Caco-2 (cell line): ENCODE measurements at regions of chr1 and their contacts with region 1.

Region 1: DNA sequence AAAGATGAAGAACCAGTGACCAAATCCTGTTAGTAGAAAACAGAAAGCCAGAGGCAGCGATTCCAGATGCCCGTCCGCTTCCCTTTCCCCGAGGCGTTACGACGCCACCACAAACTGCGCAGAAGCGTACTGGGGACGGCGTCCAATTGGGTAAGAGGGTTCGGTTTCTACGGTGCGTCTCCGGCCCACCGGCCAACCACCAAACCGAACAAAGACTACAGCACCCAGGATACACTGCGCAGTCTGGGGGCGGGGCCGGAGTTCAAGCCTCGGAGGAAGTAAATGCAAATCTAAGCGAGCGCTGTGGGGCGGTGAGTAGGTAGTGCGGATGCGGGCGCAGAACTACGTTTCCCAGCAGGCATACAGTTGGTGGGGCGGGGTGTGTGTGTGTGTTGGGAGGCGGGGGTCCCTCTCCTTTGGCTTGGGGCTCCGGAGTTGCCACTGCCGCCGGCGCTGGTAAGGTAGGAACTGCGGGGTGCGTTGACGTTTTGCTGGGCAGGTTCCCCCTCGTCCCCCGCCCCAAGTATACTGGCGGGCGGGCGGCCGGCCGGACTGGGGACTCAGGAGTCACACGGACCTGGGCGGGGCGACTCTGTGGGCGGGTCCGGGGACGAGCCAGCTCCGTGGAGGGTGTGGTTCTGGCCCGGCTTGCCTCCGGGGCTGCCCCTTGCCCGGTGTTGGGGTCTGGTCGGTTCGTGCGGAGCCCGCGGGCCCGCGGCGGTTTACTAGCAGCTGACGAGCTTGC is at the starts of genes SWT1 and TRMT1L:
- DNase-seq: peak; percentile 98
- H3K4me3 ChIP-seq: peak within 1 kb of the TSS; percentile 88
- H3K4me3 Mint-ChIP-seq: peak within 1 kb of the TSS; percentile 93
- H3K27ac Mint-ChIP-seq: peak within 1 kb of the TSS; percentile 87
- H3K4me1 ChIP-seq: peaks cover 11% of the 10 kb centered on the region; the same call in 1 of the 2 replicates
- H3K4me1 Mint-ChIP-seq: peaks cover 7% of the 10 kb centered on the region
- H3K27me3 ChIP-seq: no peaks in the 10 kb centered on the region
- H3K27me3 Mint-ChIP-seq: no peaks in the 10 kb centered on the region
- CTCF ChIP-seq: no peak
- total RNA-seq, gene SWT1: 2.7 and 2.9 TPM in 2 replicates
- total RNA-seq, gene TRMT1L: 14.2 and 23.8 TPM in 2 replicates

Region 2: GRCh38 chr1:184754476-184755225 is 402.4 kb before region 1 on chr1 and contains the start of gene EDEM3:
- CTCF ChIA-PET with region 1: no interaction called
- POLR2A ChIA-PET with region 1: no interaction called
- intact Hi-C with region 1: loop called (anchors 5 kb)
- DNase-seq: peak; percentile 98 to 99
- H3K4me3 ChIP-seq: peak within 1 kb of the TSS; percentile 82
- H3K4me3 Mint-ChIP-seq: peak within 1 kb of the TSS; percentile 98
- H3K27ac Mint-ChIP-seq: peak within 1 kb of the TSS; percentile 90
- H3K4me1 ChIP-seq: peaks cover 14% of the 10 kb centered on the region
- H3K4me1 Mint-ChIP-seq: peaks cover 25% of the 10 kb centered on the region
- H3K27me3 ChIP-seq: no peaks in the 10 kb centered on the region
- H3K27me3 Mint-ChIP-seq: no peaks in the 10 kb centered on the region
- CTCF ChIP-seq: no peak
- total RNA-seq, gene EDEM3: 13.7 and 14.1 TPM in 2 replicates

Region 3: DNA sequence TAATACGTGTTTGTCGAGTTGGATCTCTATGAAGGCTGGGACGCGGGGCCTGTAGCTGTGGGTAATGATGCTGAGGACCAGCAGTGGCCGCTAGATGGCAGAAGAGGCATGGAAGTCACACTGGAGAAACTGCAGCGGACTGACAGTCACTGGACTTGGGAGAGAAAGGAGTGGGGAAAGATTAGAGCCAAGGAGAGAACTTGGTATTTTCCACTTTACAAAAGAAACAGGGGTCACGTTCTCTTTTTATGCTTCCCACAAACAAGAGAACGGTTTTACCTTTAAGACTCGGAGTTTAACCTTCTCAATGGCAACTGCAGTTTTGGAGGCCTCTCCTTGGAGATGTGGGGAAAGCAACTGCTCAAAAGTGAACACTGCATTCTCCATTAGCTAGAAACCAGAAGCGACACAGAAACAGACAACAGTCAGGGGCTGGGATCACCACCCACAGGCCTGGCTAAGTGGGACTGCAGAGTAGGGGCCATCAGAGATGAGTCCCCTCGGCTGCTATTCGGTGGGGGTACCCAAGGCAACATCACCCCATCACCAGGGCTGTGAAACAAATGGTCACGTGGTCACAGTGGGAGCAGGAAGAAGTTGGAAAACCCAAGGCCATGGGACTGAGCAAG is 351.2 kb before region 1 on chr1:
- CTCF ChIA-PET with region 1: interaction called, 3 read pairs
- POLR2A ChIA-PET with region 1: no interaction called
- intact Hi-C with region 1: loop called (anchors 5 kb)
- DNase-seq: peak; percentile 83 to 89
- H3K4me3 ChIP-seq: no peak overlapping the region
- H3K4me3 Mint-ChIP-seq: no peak overlapping the region
- H3K27ac Mint-ChIP-seq: no peak overlapping the region
- H3K4me1 ChIP-seq: no peaks in the 10 kb centered on the region
- H3K4me1 Mint-ChIP-seq: peaks cover 9% of the 10 kb centered on the region
- H3K27me3 ChIP-seq: no peaks in the 10 kb centered on the region
- H3K27me3 Mint-ChIP-seq: no peaks in the 10 kb centered on the region
- CTCF ChIP-seq: peak; percentile 88 to 94

Region 4: DNA sequence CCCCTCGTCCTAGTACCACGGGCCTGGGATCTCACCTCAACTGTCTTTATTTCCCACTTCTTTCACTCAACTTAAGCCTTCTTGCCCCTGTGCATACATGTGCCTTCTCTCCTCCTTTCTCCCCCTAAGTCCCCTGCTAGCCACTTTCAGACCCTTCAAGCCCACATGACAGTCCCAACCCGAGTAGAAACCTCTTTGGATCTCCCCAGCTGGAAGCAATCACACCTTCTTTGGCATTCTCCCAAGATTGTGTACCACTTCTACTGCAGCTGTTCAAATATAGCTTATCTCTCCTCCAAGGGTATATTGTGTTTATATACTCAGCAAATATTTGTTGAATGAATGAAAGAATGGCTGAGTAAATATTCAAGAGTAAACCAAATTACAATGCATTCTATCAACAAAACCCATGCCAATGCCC is 251.5 kb before region 1 on chr1:
- CTCF ChIA-PET with region 1: no interaction called
- POLR2A ChIA-PET with region 1: no interaction called
- intact Hi-C with region 1: loop called (anchors 2 kb)
- DNase-seq: peak; percentile 63 to 72
- H3K4me3 ChIP-seq: no peak overlapping the region
- H3K4me3 Mint-ChIP-seq: peak overlapping the region; percentile 29
- H3K27ac Mint-ChIP-seq: peak overlapping the region; percentile 85
- H3K4me1 ChIP-seq: peaks cover 31% of the 10 kb centered on the region
- H3K4me1 Mint-ChIP-seq: peaks cover 17% of the 10 kb centered on the region
- H3K27me3 ChIP-seq: no peaks in the 10 kb centered on the region
- H3K27me3 Mint-ChIP-seq: no peaks in the 10 kb centered on the region
- CTCF ChIP-seq: no peak

Region 5: GRCh38 chr1:185044981-185045813 is 111.8 kb before region 1 on chr1 and contains the start of gene RNF2:
- CTCF ChIA-PET with region 1: no interaction called
- POLR2A ChIA-PET with region 1: interaction called, 3 read pairs
- intact Hi-C with region 1: loop called (anchors 5 kb)
- DNase-seq: peak; percentile 82 to 84
- H3K4me3 ChIP-seq: peak within 1 kb of the TSS; percentile 80
- H3K4me3 Mint-ChIP-seq: peak within 1 kb of the TSS; percentile 73
- H3K27ac Mint-ChIP-seq: peak within 1 kb of the TSS; percentile 67
- H3K4me1 ChIP-seq: peaks cover 17% of the 10 kb centered on the region
- H3K4me1 Mint-ChIP-seq: peaks cover 6% of the 10 kb centered on the region
- H3K27me3 ChIP-seq: no peaks in the 10 kb centered on the region
- H3K27me3 Mint-ChIP-seq: no peaks in the 10 kb centered on the region
- CTCF ChIP-seq: no peak
- total RNA-seq, gene RNF2: 27.1 and 31.7 TPM in 2 replicates

Region 6: DNA sequence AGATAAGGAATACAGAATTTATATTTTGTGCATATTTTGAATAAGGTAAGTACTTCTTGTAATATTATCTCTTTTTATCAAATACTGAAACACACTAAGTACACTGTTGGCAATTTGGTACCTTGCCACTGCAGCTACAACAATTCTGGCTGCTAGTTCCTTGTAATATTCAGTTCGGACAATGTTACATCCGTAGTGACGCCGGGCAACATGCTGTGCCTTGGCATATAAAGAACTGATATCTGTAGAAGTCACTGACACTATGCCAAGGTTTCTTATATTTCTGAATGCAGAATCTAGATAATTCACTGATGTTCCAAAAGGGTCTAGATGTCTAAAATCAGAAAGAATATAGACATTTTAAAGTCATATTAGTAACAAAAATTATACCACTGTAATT is 17.8 kb before region 1 on chr1:
- CTCF ChIA-PET with region 1: no interaction called
- POLR2A ChIA-PET with region 1: no interaction called
- intact Hi-C with region 1: no loop called
- DNase-seq: no peak
- H3K4me3 ChIP-seq: no peak overlapping the region
- H3K4me3 Mint-ChIP-seq: no peak overlapping the region
- H3K27ac Mint-ChIP-seq: no peak overlapping the region
- H3K4me1 ChIP-seq: no peaks in the 10 kb centered on the region
- H3K4me1 Mint-ChIP-seq: no peaks in the 10 kb centered on the region
- H3K27me3 ChIP-seq: no peaks in the 10 kb centered on the region
- H3K27me3 Mint-ChIP-seq: no peaks in the 10 kb centered on the region
- CTCF ChIP-seq: no peak

Region 7: GRCh38 chr1:185170291-185170848 is 13.3 kb after region 1 on chr1:
- CTCF ChIA-PET with region 1: interaction called, 16 read pairs
- POLR2A ChIA-PET with region 1: no interaction called
- intact Hi-C with region 1: no loop called
- DNase-seq: peak; percentile 55 to 71
- H3K4me3 ChIP-seq: no peak overlapping the region
- H3K4me3 Mint-ChIP-seq: peak overlapping the region; percentile 49
- H3K27ac Mint-ChIP-seq: no peak overlapping the region
- H3K4me1 ChIP-seq: no peaks in the 10 kb centered on the region
- H3K4me1 Mint-ChIP-seq: peaks cover 15% of the 10 kb centered on the region
- H3K27me3 ChIP-seq: no peaks in the 10 kb centered on the region
- H3K27me3 Mint-ChIP-seq: no peaks in the 10 kb centered on the region
- CTCF ChIP-seq: peak; percentile 75 to 79